Activated T-helper 1 cell treated with anti-CD3 and anti-CD28 coated beads, Interleukin-12 subunit alpha, Interleukin-12 subunit beta, Interleukin-2, Interleukin-4 antibody, amounts not matched to agents 30 ng/mL and 10 ng/mL and 1 ng/mL, durations not matched to agents 14 hours and 24 hours and 36 hours (primary cell): ENCODE measurements at regions of chr10 and their contacts with region 1.

Region 1: GRCh38 chr10:73625884-73626752 is 15.2 kb downstream of the MYOZ1 start:
- DNase-seq: peak; percentile 90
- H3K4me3 Mint-ChIP-seq: peak overlapping the region; percentile 94
- H3K27ac Mint-ChIP-seq: peak overlapping the region; percentile 95
- H3K4me1 Mint-ChIP-seq: peaks cover 17% of the 10 kb centered on the region
- H3K27me3 Mint-ChIP-seq: no peaks in the 10 kb centered on the region

Region 2: DNA sequence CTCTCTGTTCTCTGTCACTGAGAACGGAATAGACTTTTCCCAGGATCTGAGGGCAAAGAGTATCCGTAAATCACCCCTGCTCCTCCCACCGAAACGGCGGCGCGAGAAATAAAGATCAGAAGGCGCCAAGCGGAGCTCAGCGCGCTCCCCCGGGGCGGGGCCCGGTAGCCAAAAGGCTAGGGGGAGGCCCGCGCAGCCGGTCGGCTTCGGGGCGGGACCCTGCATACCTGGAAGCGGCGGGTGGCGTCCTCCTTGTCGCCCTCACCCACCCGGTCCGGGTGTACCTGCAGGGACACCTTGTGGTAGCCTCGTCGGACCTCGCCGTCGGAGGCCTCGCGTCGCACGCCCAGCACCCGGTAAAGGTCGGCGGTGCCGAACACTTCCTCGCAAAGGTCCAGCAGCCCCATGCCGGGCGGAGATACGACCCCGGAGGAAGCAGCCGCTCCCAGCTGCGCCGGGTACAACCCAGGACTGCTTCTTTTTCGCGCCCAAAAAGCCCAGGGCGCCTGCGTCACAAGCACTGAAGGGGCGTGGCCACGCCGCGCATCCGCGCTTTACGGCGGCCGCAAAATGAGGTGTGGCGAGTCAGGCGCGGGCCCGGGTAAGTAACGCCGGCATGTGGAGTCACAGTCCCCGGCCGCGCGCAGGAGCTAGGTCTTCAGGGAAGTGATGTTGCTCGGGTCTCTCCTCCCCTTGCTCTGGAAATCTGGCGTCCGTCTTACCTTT is 379.2 kb before region 1 on chr10 and contains the start of gene DNAJC9:
- intact Hi-C with region 1: loop called (anchors 1 kb)
- DNase-seq: peak; percentile 96
- H3K4me3 Mint-ChIP-seq: peak within 1 kb of the TSS; percentile 97
- H3K27ac Mint-ChIP-seq: peak within 1 kb of the TSS; percentile 95
- H3K4me1 Mint-ChIP-seq: peaks cover 67% of the 10 kb centered on the region
- H3K27me3 Mint-ChIP-seq: no peaks in the 10 kb centered on the region
- total RNA-seq, gene DNAJC9: 55.4 and 55.5 TPM in 2 replicates

Region 3: DNA sequence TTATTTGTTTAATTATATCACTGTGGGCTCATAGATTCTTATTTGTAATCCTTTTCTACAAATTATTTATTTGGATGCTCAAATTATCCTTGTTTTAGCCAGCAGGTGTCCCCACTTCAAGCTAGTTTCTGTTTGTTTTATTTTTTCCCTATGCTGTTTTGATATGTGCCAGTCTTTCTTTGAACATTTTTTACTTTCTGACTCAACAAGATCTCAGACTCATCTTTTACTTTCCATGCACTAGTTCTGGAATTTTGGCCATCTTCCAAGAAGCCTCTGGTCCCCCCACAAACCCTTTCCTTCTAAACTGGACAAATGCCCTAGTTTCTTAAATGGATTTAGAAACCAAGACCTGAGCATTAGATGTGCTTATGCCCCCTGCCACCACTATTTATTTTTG is 362.2 kb before region 1 on chr10:
- intact Hi-C with region 1: no loop called
- DNase-seq: no peak
- H3K4me3 Mint-ChIP-seq: no peak overlapping the region
- H3K27ac Mint-ChIP-seq: no peak overlapping the region
- H3K4me1 Mint-ChIP-seq: peaks cover 10% of the 10 kb centered on the region
- H3K27me3 Mint-ChIP-seq: peaks cover 15% of the 10 kb centered on the region

Region 4: DNA sequence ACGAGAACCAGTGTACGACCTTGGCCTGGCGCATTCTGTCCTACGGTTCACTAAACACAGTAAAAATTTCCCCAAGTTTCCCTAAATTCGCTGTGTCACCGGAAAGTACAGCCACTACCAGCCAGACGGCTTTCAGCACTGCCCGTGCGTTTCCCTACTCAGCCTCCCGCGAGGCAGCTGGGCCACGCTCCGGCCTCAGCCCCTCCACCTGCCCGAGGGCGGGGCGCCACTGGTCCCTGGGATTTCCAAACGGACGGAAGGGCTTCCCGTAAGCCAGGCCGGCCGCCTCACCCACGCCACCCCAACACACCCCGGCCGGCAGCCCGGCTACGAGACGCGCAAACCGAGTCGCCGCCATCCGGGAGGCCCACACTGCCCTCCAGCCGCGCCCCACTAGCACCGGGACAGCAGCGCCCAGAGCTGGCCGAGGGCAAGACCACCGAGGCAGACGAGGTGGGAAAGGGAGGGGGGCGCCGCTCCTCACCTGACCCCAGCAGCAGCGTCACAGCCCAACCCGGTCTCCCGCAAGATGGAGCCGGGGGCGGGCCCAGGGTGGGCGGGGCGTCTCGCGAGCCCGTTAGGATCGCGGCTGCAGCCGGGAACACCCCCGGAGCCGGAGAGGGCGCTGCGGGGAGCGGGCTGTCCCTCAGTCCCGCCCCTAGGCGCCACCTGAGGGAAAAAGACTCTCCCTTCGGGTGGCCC is 212.4 kb before region 1 on chr10 and contains the start of gene ANXA7:
- intact Hi-C with region 1: loop called (anchors 1 kb)
- DNase-seq: peak; percentile 89
- H3K4me3 Mint-ChIP-seq: peak within 1 kb of the TSS; percentile 92
- H3K27ac Mint-ChIP-seq: peak within 1 kb of the TSS; percentile 90
- H3K4me1 Mint-ChIP-seq: peaks cover 45% of the 10 kb centered on the region
- H3K27me3 Mint-ChIP-seq: no peaks in the 10 kb centered on the region
- total RNA-seq, gene ANXA7: 152 and 157 TPM in 2 replicates

Region 5: GRCh38 chr10:73576178-73576889 is 49.8 kb before region 1 on chr10:
- intact Hi-C with region 1: no loop called
- DNase-seq: no peak
- H3K4me3 Mint-ChIP-seq: no peak overlapping the region
- H3K27ac Mint-ChIP-seq: no peak overlapping the region
- H3K4me1 Mint-ChIP-seq: no peaks in the 10 kb centered on the region
- H3K27me3 Mint-ChIP-seq: no peaks in the 10 kb centered on the region

Region 6: DNA sequence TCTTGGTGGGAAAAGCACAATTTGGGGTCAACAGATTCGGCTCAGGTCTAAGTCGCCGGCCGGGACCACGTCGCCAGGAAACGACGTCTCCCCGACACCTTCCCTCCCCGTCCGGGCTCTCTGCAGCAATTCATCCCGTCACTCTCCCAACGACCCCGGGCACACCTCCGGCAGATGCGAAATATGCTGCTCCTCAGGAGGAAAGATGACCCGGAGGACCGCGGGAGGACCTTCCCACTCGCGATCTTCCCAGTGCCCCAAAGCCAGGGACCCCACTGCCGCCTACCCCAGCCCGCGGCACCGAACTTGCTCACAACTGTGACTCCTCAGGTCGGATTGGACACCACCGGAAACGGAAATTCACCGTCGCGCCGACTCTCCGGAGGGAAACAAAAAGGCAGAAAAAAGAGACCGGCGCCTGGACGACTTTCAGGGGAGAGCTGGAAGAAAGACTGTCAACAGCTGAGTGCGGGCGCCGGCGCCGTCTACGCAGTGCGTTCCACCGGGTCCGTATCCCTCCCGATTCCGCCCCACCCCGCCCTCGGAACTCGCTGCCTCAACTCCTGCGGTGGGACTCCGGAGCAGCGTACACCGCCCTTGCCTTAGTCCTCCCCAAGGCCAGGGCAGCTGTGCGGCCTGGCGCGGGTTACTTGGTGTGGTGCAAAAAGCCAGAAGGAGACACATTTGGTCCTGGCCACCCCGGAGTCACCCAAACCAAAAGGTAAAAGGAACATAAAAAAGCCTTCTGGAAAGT is 104.2 kb after region 1 on chr10:
- intact Hi-C with region 1: loop called (anchors 1 kb)
- DNase-seq: peak; percentile 92
- H3K4me3 Mint-ChIP-seq: peak overlapping the region; percentile 95
- H3K27ac Mint-ChIP-seq: peak overlapping the region; percentile 97
- H3K4me1 Mint-ChIP-seq: peaks cover 10% of the 10 kb centered on the region
- H3K27me3 Mint-ChIP-seq: peaks cover 2% of the 10 kb centered on the region

Region 7: DNA sequence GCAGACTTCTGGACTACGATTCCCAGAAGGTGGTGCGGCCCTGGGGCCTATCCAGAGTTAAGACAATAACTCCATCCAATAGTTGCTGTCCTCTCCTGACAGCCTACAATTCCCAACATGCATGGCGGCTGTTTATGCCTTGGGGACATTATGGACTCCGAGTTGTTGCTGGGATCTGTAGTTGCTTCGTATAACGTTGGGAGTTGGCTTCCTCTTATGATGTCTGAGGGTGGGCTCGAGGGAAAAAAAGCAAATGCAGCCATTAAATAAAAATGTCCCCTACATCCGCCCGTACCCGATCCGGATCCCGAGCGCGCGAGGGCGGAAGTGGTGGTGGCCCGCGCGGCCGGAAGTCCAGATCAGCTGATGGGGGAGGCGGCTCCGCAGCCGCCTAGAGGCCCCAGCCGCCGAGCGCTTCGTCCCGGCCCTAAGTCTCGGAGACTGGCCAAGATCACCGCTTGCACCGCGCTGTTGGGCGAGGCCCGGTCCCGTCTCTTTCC is 159.2 kb after region 1 on chr10 and contains the start of gene ZSWIM8:
- intact Hi-C with region 1: loop called (anchors 1 kb)
- DNase-seq: peak; percentile 79
- H3K4me3 Mint-ChIP-seq: peak within 1 kb of the TSS; percentile 99
- H3K27ac Mint-ChIP-seq: peak within 1 kb of the TSS; percentile 87
- H3K4me1 Mint-ChIP-seq: peaks cover 48% of the 10 kb centered on the region
- H3K27me3 Mint-ChIP-seq: no peaks in the 10 kb centered on the region
- total RNA-seq, gene ZSWIM8: 54.2 and 56.3 TPM in 2 replicates